ENCODE measurements at regions of chr20 and their contacts with region 1.

Region 1: GRCh38 chr20:45823949-45824835 is 2.9 kb downstream of the TNNC2 start:
- DNase-seq: peak; percentile 59 to 73 (median 65)
- H3K4me3 ChIP-seq: peak overlapping the region; percentile 1
- H3K27ac ChIP-seq: no peak overlapping the region
- H3K4me1 ChIP-seq: peaks cover 16% of the 10 kb centered on the region
- H3K27me3 ChIP-seq: no peaks in the 10 kb centered on the region
- CTCF ChIP-seq: peak in 2 of 3 donors; percentile 37 to 50
- EP300 ChIP-seq: no peak
- POLR2A ChIP-seq: no peak

Region 2: DNA sequence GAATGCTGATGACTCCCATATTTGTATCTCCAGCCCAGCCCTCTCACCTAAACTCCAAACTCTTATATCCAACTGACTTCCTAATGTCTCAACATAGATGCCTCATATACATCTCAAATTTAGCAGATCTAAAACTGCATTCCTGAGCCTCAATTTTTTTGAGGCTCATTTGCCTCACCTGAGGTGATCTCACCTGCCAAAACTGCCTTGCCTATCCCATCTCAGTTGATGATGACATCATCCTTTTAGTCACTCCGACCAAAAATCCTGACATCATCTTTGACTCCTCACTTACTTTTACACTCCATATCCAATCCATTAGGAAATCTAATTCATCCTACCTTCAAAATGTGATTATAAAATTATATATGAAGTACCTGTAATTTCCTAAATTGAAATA is 544.2 kb before region 1 on chr20:
- intact Hi-C with region 1: no loop called
- DNase-seq: no peak
- H3K4me3 ChIP-seq: no peak overlapping the region
- H3K27ac ChIP-seq: no peak overlapping the region
- H3K4me1 ChIP-seq: no peaks in the 10 kb centered on the region
- H3K27me3 ChIP-seq: no peaks in the 10 kb centered on the region
- CTCF ChIP-seq: no peak
- EP300 ChIP-seq: no peak
- POLR2A ChIP-seq: no peak

Region 3: DNA sequence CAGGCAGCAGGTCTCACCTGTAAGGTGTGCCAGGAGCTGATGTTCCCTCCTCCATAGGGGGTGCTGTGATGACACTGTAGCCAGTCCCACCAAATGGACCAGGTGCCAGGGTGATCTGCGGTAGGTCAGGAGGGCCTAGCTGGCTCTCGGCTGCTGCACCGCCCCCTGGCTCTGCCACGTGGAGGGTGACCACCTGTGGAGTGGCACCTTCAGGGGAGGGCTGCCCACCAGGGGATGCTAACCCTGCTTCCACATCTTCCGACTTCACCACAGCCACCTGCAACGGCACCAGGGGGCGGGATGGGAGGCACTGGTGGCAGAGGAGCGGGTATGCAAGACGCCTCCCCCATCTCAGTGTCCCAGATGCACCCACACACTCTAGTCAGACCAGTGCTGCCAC is 129.5 kb after region 1 on chr20:
- intact Hi-C with region 1: loop called in 1 of 4 experiments (anchors 5 kb)
- DNase-seq: peak in 2 of 5 donors; percentile 21 to 37
- H3K4me3 ChIP-seq: no peak overlapping the region
- H3K27ac ChIP-seq: no peak overlapping the region
- H3K4me1 ChIP-seq: no peaks in the 10 kb centered on the region
- H3K27me3 ChIP-seq: no peaks in the 10 kb centered on the region
- CTCF ChIP-seq: no peak
- EP300 ChIP-seq: no peak
- POLR2A ChIP-seq: no peak

Region 4: DNA sequence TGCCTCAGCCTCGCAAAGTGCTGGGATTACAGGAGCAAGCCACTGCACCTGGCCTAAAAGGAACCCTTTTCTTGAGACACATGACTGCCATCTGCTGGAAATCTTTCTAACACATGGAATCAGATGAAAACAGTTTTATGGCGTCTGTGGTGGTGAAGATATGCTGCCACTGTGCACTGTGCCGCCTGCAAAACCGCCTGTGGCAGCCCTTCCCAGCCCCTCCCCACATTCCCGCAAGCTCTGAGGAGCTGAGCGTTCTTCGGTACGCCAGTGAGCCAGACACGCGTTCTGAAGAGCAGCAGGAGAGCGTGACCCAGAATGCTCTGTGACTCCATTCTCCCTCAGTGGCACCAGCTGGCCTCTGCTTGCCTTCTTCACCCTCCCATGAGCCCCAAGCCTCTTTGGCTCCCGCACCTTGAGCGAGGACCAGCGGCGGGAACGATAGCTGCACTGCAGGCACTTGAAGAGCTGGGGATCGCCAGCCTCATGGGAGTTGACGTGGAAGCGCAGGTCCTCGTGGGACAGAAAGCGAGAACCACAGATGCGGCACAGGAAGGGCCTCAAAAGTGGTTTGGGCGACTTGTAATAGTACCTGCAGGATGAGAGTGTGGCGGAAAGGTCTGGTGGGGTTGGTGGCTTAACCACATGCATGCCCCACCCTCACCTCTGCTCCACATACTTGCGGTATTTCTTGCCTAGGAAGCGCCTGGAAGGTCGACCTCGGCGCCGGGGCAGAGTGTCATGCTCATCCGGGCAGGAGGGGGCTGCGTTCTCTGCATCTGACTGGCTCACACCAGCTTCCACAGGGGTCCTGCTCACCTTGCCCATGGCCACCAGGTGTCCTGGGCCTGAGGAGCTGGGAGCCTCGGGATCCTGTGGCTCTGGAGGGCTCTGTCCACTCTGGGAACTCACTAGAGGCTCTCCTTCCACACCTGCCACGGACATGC is 139.1 kb after region 1 on chr20:
- intact Hi-C with region 1: loop called in 2 of 4 experiments (anchors 5 to 10 kb)
- DNase-seq: peak in 3 of 5 donors; percentile 28 to 42 (median 30)
- H3K4me3 ChIP-seq: no peak overlapping the region
- H3K27ac ChIP-seq: no peak overlapping the region
- H3K4me1 ChIP-seq: no peaks in the 10 kb centered on the region
- H3K27me3 ChIP-seq: no peaks in the 10 kb centered on the region
- CTCF ChIP-seq: peak in 2 of 3 donors; percentile 13 to 33
- EP300 ChIP-seq: no peak
- POLR2A ChIP-seq: no peak

Region 5: DNA sequence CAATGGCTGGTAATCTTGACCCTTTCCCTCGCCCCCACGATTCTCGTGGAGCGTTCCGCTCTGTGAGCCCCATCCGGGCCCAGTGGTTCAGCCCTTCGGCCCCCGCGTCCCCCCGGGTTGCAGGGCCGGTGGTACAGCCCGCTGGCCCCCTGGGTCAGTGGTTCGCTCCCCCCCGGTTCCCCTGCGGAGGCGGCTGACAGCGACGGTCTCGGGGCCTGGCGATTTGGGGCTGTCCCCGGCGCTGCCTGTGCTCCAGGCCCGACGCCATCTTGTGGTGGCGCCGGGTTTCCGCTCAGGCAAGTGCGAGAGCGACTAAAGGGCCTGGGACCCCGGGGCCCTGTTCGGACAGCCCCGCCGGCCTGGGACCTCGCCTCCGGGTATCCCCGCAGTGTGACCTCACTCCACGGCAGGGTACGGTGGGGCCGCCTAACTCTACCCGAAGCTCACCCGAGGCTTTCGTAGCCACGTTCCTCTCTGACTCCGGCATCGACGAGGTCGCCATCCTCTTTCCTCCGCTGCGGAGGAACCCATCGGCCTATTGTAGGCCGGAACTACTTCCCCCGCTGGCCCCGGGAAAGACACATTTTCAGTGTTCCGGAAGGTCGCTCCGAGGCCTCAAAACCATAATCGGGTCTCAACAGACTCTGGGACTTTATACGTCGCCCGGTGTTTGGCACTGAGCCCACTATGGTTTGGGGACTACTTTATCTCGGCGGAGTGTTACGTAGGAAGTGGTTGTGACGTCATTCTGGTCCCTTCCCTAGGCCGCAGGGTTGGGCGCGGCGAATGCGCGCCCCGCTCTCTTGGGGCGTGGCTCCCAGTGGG is 147.7 kb after region 1 on chr20 and contains the start of gene ZNF335:
- intact Hi-C with region 1: loop called in 1 of 4 experiments (anchors 10 kb)
- DNase-seq: peak; percentile 95 to 98 (median 96)
- H3K4me3 ChIP-seq: peak within 1 kb of the TSS; percentile 70
- H3K27ac ChIP-seq: peak within 1 kb of the TSS; percentile 98 to 100
- H3K4me1 ChIP-seq: peaks cover 4% of the 10 kb centered on the region
- H3K27me3 ChIP-seq: no peaks in the 10 kb centered on the region
- CTCF ChIP-seq: peak; percentile 31 to 86 (median 82)
- EP300 ChIP-seq: peak; percentile 69
- POLR2A ChIP-seq: peak; percentile 64
- total RNA-seq, gene ZNF335: 14.2 to 25.7 (median 20.0) TPM